Activated CD4-positive, alpha-beta T cell treated with anti-CD3 and anti-CD28 coated beads for 36 hours (primary cell): ENCODE measurements at regions of chr12 and their contacts with region 1.

Region 1: GRCh38 chr12:6267139-6267721 is 43.3 kb upstream of the PLEKHG6 start:
- DNase-seq: peak; percentile 84
- ATAC-seq: peak; percentile 87
- H3K4me3 Mint-ChIP-seq: no peak overlapping the region
- H3K27ac Mint-ChIP-seq: peak overlapping the region; percentile 55
- H3K4me1 Mint-ChIP-seq: peaks cover 16% of the 10 kb centered on the region
- H3K27me3 Mint-ChIP-seq: peaks cover 2% of the 10 kb centered on the region

Region 2: DNA sequence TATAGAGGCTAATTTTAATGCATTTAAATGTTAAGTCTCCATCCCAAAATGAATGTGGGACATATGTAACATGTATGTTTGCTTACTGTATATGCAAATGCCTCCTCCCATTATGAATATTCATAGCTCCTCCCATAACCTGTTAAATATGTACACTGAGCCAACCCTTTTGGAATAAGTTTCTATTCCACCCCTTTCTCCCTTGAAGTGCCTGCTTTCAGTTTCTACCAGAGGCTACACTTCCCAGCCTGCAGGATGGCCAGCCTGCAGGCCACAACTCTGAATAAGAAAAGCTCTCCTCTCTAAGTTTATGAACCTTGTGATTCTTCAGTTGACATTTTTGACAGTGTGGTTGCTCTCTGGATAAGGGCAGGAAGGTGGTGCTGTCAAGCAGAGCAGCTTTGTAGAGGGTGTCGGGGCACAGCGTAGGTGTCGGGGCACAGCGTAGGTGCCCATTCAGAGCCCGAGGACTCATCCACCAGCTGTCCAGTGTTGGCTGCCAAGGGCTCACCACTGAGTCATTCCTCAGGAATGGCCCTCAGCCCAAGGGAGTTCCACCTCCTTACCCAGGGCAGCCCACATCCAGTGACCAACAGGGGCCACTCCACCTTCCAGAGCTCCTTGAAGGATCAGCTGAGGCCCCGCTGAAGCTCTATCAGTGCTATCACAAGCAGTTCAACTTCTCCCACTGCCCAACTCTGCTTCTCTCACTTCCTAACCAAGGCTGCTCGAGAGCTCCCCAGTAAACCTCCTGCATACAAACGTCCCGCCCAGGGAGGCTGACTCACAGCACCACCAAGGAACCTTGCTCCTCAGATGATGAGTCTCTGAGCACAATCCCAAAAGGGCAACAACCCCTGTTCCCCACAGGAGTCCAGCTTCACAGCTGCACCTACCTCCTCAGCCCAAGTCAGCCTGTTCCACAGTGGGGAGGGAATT is 174.2 kb before region 1 on chr12:
- CTCF ChIA-PET with region 1: no interaction called
- POLR2A ChIA-PET with region 1: no interaction called
- intact Hi-C with region 1: no loop called
- DNase-seq: no peak
- ATAC-seq: no peak
- H3K4me3 Mint-ChIP-seq: no peak overlapping the region
- H3K27ac Mint-ChIP-seq: no peak overlapping the region
- H3K4me1 Mint-ChIP-seq: no peaks in the 10 kb centered on the region
- H3K27me3 Mint-ChIP-seq: peaks cover 7% of the 10 kb centered on the region

Region 3: DNA sequence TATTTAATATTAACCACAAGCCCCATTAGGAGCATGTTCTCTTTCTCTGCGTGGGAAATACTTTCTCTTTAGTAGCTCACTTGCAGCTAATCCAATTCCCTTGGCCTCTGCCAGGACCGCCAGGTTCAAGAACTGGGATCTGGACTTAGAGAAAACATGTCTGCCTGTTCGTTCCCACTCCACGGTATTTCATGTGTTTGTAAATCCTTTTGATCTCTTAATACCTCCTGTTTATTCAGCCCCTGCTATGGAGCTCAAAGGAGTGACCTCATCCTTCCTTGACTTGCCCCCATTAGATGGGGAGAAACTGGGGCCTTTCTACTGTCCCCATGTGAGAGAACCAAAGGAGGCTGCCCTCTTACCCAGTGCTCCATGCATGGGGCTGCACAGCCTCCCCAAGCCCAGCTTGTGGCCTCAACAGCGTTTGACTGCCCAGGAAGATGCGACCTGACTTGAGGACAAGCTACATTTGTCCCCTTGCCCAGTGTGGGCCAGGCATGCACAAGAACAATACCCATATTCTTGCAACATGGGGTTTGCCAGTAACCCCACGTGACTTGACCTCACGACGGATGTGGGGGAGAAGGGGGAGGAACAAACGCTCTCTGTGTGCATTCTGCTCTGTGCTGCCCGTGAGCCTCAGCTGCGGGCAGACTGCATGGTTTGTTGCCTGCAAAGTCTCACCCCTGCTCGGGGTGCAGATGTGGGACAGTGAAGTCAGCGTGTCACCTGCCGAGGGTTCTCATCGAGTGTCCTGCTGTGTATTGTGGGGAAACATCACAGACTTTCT is 36.7 kb before region 1 on chr12:
- CTCF ChIA-PET with region 1: no interaction called
- POLR2A ChIA-PET with region 1: no interaction called
- intact Hi-C with region 1: loop called (anchors 1 kb)
- DNase-seq: peak; percentile 87
- ATAC-seq: peak; percentile 87
- H3K4me3 Mint-ChIP-seq: peak overlapping the region; percentile 49
- H3K27ac Mint-ChIP-seq: peak overlapping the region; percentile 84
- H3K4me1 Mint-ChIP-seq: peaks cover 33% of the 10 kb centered on the region
- H3K27me3 Mint-ChIP-seq: no peaks in the 10 kb centered on the region

Region 4: GRCh38 chr12:6250343-6250742 is 16.9 kb before region 1 on chr12:
- CTCF ChIA-PET with region 1: no interaction called
- POLR2A ChIA-PET with region 1: no interaction called
- intact Hi-C with region 1: no loop called
- DNase-seq: no peak
- ATAC-seq: no peak
- H3K4me3 Mint-ChIP-seq: no peak overlapping the region
- H3K27ac Mint-ChIP-seq: no peak overlapping the region
- H3K4me1 Mint-ChIP-seq: no peaks in the 10 kb centered on the region
- H3K27me3 Mint-ChIP-seq: peaks cover 2% of the 10 kb centered on the region

Region 5: GRCh38 chr12:6307529-6307928 is 40.3 kb after region 1 on chr12:
- CTCF ChIA-PET with region 1: no interaction called
- POLR2A ChIA-PET with region 1: no interaction called
- intact Hi-C with region 1: no loop called
- DNase-seq: no peak
- ATAC-seq: no peak
- H3K4me3 Mint-ChIP-seq: no peak overlapping the region
- H3K27ac Mint-ChIP-seq: no peak overlapping the region
- H3K4me1 Mint-ChIP-seq: peaks cover under 1% of the 10 kb centered on the region
- H3K27me3 Mint-ChIP-seq: peaks cover 9% of the 10 kb centered on the region

Region 6: GRCh38 chr12:6443361-6443983 is 176.2 kb after region 1 on chr12:
- CTCF ChIA-PET with region 1: no interaction called
- POLR2A ChIA-PET with region 1: no interaction called
- intact Hi-C with region 1: no loop called
- DNase-seq: peak; percentile 76
- ATAC-seq: peak; percentile 65
- H3K4me3 Mint-ChIP-seq: peak overlapping the region; percentile 86
- H3K27ac Mint-ChIP-seq: peak overlapping the region; percentile 94
- H3K4me1 Mint-ChIP-seq: peaks cover 71% of the 10 kb centered on the region
- H3K27me3 Mint-ChIP-seq: no peaks in the 10 kb centered on the region